SK-N-SH (cell line): ENCODE measurements at regions of chr1 and their contacts with region 1.

Region 1: GRCh38 chr1:186482661-186483255 is 21.8 kb upstream of the PDC start:
- DNase-seq: peak; percentile 49
- H3K4me3 ChIP-seq: peak overlapping the region in 1 of 2 experiments; percentile 16; a peak in 1 of 4 replicates
- H3K27ac ChIP-seq: no peak overlapping the region
- H3K4me1 ChIP-seq: no peaks in the 10 kb centered on the region; a peak in 1 of 4 replicates
- H3K27me3 ChIP-seq: no peaks in the 10 kb centered on the region
- CTCF ChIP-seq: peak; percentile 99
- EP300 ChIP-seq: no peak
- RAD21 ChIP-seq: peak; percentile 93

Region 2: GRCh38 chr1:186958520-186958919 is 475.8 kb after region 1 on chr1:
- CTCF ChIA-PET with region 1: no interaction called
- POLR2A ChIA-PET with region 1: no interaction called
- DNase-seq: no peak
- H3K4me3 ChIP-seq: no peak overlapping the region
- H3K27ac ChIP-seq: no peak overlapping the region
- H3K4me1 ChIP-seq: no peaks in the 10 kb centered on the region; a peak in 1 of 4 replicates
- H3K27me3 ChIP-seq: no peaks in the 10 kb centered on the region
- CTCF ChIP-seq: no peak
- EP300 ChIP-seq: no peak
- RAD21 ChIP-seq: no peak

Region 3: GRCh38 chr1:186985889-186986491 is 503.2 kb after region 1 on chr1:
- CTCF ChIA-PET with region 1: interaction called, 14 read pairs
- POLR2A ChIA-PET with region 1: no interaction called
- DNase-seq: peak; percentile 39
- H3K4me3 ChIP-seq: no peak overlapping the region; a peak in 1 of 4 replicates
- H3K27ac ChIP-seq: no peak overlapping the region
- H3K4me1 ChIP-seq: peaks cover 0 to 2% of the 10 kb centered on the region in 2 experiments; a peak in 2 of 4 replicates
- H3K27me3 ChIP-seq: no peaks in the 10 kb centered on the region
- CTCF ChIP-seq: peak; percentile 84
- EP300 ChIP-seq: no peak
- RAD21 ChIP-seq: peak; percentile 97

Region 4: DNA sequence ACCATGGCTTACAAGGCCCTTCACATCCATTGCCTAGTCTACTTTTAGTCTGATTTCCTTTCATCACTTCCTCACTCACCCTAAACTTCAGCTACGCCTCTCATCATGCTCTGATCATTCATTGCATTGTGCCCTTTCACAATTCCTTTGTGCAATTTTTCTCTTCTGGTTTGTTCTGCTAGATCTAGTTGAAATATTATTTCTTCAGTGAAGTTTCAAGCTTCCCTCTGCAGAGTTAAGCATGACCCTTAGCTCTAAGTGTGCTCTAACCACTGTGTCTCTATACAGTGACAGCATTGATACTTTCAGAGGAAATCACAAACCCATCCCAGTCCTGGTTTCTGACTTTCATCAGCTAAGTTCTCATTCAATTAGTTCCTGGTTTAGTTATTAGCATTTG is 512.1 kb after region 1 on chr1:
- CTCF ChIA-PET with region 1: interaction called, 15 read pairs
- POLR2A ChIA-PET with region 1: no interaction called
- DNase-seq: no peak
- H3K4me3 ChIP-seq: no peak overlapping the region
- H3K27ac ChIP-seq: no peak overlapping the region
- H3K4me1 ChIP-seq: no peaks in the 10 kb centered on the region
- H3K27me3 ChIP-seq: no peaks in the 10 kb centered on the region
- CTCF ChIP-seq: no peak
- EP300 ChIP-seq: no peak
- RAD21 ChIP-seq: no peak